Heart left ventricle (tissue), 16 donors: ENCODE measurements at regions of chr11 and their contacts with region 1.

Region 1: GRCh38 chr11:68206187-68206601 is 6.9 kb downstream of the KMT5B start:
- DNase-seq: no peak
- ATAC-seq: peak in 3 of 4 donors; percentile 38 to 40 (median 38)
- H3K4me3 ChIP-seq: no peak overlapping the region
- H3K27ac ChIP-seq: no peak overlapping the region
- H3K4me1 ChIP-seq: peaks cover 0 to 84% (median 66%) of the 10 kb centered on the region in 12 donors
- H3K27me3 ChIP-seq: no peaks in the 10 kb centered on the region
- CTCF ChIP-seq: peak; percentile 70 to 88 (median 80)
- POLR2A ChIP-seq: no peak

Region 2: DNA sequence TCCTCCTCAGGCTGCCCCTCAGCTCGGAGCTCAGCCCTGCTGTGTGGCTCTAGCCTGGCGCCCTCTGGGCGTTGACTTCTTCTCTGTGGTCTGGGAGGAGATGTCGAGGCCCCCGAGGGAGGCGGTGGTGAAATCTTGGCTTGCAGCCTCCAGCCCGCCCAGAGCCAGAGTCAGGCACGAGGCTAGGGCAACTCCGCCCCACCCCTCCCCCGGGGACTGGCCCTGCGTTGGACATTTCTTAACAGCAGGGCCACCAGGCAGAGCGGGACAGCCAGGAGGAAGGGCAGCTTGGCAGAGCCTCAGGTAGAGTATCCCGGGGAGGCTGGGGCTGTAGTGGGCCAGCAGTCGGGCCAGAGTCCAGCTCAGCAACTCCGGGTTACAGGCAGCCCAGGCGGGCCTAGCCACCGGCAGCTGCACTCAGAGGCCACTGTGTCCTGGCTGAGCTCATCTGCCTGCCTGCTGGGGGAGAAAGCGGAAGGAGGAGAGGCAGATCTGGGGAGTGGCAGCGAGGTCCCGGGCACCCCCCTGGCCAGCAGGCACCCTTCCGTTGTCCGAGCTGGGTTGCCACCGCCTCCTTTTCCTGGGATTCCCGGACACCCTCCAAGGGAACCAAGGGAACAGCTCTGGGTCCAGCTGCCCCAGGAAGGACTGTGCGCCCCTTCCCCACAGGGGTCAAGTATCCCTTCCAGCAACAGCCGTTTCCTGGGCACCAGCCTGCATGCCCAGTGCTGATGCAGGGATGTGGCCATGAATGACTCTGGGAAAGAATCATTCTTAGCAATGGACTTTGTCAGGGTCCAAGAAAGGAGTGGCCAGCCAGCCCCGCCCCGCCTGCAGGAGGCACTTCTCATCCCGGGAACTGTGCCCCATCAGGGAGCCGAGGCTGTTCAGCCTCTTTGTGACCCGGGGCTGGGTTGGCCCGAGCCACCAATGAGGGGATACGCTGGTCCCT is 195.8 kb before region 1 on chr11 and contains the start of gene ALDH3B1:
- intact Hi-C with region 1: loop called in 2 of 10 experiments (anchors 10 kb)
- DNase-seq: peak; percentile 84 to 94 (median 90)
- ATAC-seq: peak; percentile 77 to 87 (median 84)
- H3K4me3 ChIP-seq: peak within 1 kb of the TSS in 10 of 12 donors; percentile 7 to 60 (median 38)
- H3K27ac ChIP-seq: peak within 1 kb of the TSS; percentile 55 to 96 (median 78)
- H3K4me1 ChIP-seq: peaks cover 0 to 69% (median 20%) of the 10 kb centered on the region in 12 donors
- H3K27me3 ChIP-seq: no peaks in the 10 kb centered on the region
- CTCF ChIP-seq: no peak
- POLR2A ChIP-seq: peak in 1 of 2 donors; percentile 39
- total RNA-seq, gene ALDH3B1: 2.3 to 25.4 (median 6.1) TPM

Region 3: GRCh38 chr11:68038718-68039525 is 167.3 kb before region 1 on chr11 and contains the start of gene TCIRG1:
- intact Hi-C with region 1: loop called in 4 of 10 experiments (anchors 5 to 10 kb)
- DNase-seq: peak; percentile 88 to 94 (median 91)
- ATAC-seq: peak; percentile 67 to 88 (median 82)
- H3K4me3 ChIP-seq: peak within 1 kb of the TSS; percentile 52 to 95 (median 81)
- H3K27ac ChIP-seq: peak within 1 kb of the TSS; percentile 74 to 96 (median 90)
- H3K4me1 ChIP-seq: peaks cover 11 to 58% (median 41%) of the 10 kb centered on the region in 12 donors
- H3K27me3 ChIP-seq: no peaks in the 10 kb centered on the region
- CTCF ChIP-seq: no peak
- POLR2A ChIP-seq: peak; percentile 73 to 98
- total RNA-seq, gene TCIRG1: 10.2 to 88.7 (median 20.3) TPM

Region 4: DNA sequence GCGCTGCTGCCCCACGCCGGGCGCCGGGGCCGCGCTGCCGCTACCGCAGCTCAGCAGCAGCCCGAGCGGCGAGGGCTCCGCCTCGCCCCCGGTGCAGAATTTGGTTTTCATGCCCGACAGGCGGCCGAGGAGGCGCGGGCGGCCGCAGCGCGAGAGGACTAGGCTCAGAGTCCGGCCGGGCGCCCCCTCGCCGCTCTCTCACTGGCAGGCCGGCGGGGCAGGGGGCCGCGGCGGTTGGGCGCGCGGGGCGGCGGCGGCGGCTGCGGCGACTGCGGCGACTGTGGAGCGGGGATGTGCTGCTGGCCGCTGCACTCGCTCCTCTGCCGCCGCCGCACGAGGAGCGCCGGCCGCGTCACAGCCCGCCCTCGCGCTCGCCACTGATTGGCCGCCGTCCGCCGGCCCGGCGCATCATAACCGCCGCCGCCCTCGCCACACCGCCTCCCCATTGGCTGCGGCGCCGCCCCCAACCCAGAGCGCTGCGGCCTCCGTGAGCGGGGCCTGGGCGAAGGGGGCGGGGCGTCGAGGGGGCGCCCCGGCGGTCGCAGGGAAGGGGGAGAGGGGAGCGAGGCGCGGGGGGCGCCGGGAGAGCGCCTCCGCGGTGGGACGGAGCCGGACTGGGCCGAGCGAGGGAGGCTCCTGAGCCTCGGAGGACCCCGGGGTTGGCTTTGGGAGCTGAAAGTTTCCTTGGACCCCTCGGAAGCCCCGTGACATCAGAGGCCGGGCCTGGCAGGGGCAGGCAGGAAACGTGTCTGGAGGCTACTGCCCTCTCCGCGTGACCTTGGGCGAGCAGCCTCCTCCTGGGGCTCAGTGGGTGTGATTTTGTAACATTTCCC is 84.9 kb before region 1 on chr11 and contains the start of gene CHKA:
- intact Hi-C with region 1: loop called in 2 of 10 experiments (anchors 5 kb)
- DNase-seq: peak; percentile 94 to 97 (median 95)
- ATAC-seq: peak; percentile 85 to 97 (median 95)
- H3K4me3 ChIP-seq: peak within 1 kb of the TSS; percentile 38 to 87 (median 76)
- H3K27ac ChIP-seq: peak within 1 kb of the TSS; percentile 91 to 100 (median 99)
- H3K4me1 ChIP-seq: peaks cover 0 to 54% (median 39%) of the 10 kb centered on the region in 12 donors
- H3K27me3 ChIP-seq: no peaks in the 10 kb centered on the region
- CTCF ChIP-seq: peak in 2 of 12 donors; percentile 15 to 24
- POLR2A ChIP-seq: peak; percentile 65 to 83
- total RNA-seq, gene CHKA: 6.1 to 15.0 (median 8.2) TPM

Region 5: DNA sequence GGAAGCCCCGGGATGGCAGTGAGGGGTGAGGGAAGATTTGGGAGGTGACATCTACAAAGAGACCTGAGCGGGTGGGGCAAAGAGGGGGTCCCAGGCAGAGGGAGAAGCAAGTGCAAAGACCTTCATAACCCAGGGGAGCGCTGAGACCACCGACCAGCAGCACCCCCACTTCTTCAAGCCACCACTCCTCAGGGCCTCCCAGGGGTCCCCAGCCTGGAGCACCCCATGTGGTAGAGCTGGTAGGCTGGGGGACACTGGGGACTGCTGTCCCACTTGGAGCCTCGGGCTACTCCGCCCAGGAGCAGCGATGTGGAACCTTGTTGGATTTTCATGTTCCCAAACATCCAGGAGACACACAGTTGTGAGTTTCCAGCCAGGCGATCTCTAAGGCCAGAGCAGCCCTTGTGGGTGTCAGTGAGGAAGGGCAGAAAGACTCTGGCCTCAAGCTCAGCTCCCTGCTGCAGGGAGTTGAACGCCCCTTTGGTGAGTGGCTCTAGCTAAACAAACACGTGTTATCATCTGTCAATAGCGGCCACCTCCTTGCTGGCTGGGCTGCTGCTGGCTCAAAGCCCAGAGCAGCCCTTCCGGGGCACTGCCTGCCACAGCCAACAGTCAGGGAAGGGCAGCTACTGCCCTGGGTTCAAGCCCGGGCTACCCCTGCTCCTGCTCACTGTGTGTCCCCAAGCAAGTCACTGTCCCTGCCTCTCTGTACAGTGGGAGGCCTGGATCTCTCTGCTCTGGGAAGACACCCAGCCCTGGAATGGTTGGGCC is 59.3 kb before region 1 on chr11:
- intact Hi-C with region 1: no loop called
- DNase-seq: peak in 4 of 5 donors; percentile 29 to 69 (median 50)
- ATAC-seq: peak; percentile 43 to 76 (median 68)
- H3K4me3 ChIP-seq: no peak overlapping the region
- H3K27ac ChIP-seq: peak overlapping the region; percentile 67 to 82 (median 78)
- H3K4me1 ChIP-seq: peaks cover 0 to 34% (median 19%) of the 10 kb centered on the region in 12 donors
- H3K27me3 ChIP-seq: no peaks in the 10 kb centered on the region
- CTCF ChIP-seq: no peak
- POLR2A ChIP-seq: no peak

Region 6: DNA sequence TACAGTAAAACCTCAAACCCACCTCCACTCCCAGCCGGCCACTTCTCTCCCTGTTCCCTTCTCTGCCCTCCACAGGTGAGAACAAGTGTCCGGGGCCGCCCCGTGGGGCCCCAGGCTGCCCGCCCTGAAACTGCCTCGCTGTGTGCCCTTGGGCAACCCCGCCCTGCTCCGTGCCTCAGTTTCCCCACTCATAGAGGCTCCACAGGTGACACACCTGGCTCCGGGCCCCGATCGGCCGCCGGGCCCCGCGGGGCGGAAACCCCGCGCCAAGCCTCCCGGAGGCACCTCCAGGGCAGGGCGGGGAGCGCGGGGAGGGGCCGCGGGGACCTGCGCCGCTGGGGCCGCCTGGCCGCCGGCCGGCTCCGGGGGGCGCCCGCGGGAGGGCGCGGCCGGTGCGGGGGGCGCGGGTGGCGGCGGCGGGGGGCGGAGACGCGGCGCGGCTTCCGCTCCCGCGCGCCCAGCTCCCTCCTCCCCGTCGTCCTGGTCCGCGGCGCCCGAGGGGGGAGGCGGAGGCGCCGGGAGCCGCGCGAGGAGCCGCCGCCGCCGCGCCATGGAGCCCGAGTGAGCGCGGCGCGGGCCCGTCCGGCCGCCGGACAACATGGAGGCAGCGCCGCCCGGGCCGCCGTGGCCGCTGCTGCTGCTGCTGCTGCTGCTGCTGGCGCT is 106.1 kb after region 1 on chr11 and contains the start of gene LRP5:
- intact Hi-C with region 1: no loop called
- DNase-seq: peak in 2 of 5 donors; percentile 31 to 46
- ATAC-seq: peak in 2 of 4 donors; percentile 21 to 22
- H3K4me3 ChIP-seq: peak within 1 kb of the TSS; percentile 25 to 94 (median 72)
- H3K27ac ChIP-seq: peak within 1 kb of the TSS; percentile 47 to 93 (median 84)
- H3K4me1 ChIP-seq: peaks cover 0 to 51% (median 37%) of the 10 kb centered on the region in 12 donors
- H3K27me3 ChIP-seq: peaks cover 0 to 3% (median 0%) of the 10 kb centered on the region in 9 donors
- CTCF ChIP-seq: no peak
- POLR2A ChIP-seq: no peak
- total RNA-seq, gene LRP5: 34.5 to 62.5 (median 39.8) TPM

Region 7: DNA sequence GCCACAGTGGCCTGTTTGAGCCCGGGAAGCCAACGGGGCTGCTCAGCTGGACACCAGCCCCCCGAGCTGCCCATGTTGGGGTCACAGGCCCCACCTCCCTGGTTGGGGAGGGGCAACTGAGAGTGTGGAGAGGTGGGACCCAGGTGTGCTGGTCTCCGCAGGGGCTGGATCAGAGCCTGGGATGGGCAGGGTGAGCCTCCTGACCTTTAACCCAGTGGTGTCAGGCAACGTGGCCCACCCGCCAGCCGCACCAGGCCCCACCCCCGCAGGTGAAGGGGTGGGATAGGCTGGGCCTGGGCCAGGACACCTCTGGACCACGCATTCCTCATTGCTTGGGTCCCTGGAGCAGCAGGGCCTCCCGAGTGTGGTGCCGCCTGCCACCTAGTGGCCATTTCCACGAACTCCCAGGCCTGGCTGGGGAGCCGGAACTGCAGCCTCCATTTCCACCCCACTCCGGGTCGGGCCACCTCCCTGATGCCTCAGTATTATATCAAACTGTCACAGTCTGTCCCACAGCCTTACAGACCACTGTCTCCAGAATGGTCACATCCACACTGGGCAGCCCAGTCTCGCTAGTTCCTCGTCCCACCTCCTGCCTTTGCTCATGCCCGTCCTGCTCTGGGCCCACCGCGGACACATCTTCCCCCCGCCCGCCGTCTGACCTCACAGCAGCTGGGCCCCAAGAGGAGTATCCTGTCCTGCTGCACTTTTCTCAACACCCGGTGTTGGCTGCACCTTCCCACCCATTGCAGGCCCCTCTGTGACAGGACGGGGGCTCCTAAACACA is 241.0 kb after region 1 on chr11:
- intact Hi-C with region 1: loop called in 4 of 10 experiments (anchors 2 to 5 kb)
- DNase-seq: peak; percentile 75 to 89 (median 79)
- ATAC-seq: peak; percentile 65 to 93 (median 90)
- H3K4me3 ChIP-seq: no peak overlapping the region
- H3K27ac ChIP-seq: peak overlapping the region in 2 of 12 donors; percentile 19 to 38
- H3K4me1 ChIP-seq: peaks cover 0 to 11% (median 1%) of the 10 kb centered on the region in 12 donors
- H3K27me3 ChIP-seq: no peaks in the 10 kb centered on the region
- CTCF ChIP-seq: peak; percentile 90 to 98 (median 96)
- POLR2A ChIP-seq: no peak

Region 8: GRCh38 chr11:68666849-68667248 is 460.7 kb after region 1 on chr11:
- intact Hi-C with region 1: no loop called
- DNase-seq: peak in 2 of 5 donors; percentile 14 to 26
- ATAC-seq: no peak
- H3K4me3 ChIP-seq: no peak overlapping the region
- H3K27ac ChIP-seq: no peak overlapping the region
- H3K4me1 ChIP-seq: no peaks in the 10 kb centered on the region
- H3K27me3 ChIP-seq: peaks cover 0 to 31% (median 0%) of the 10 kb centered on the region in 9 donors
- CTCF ChIP-seq: no peak
- POLR2A ChIP-seq: no peak